ENCODE measurements at regions of chr20 and their contacts with region 1.

Region 1: GRCh38 chr20:34190679-34191090 is 50.5 kb upstream of the ASIP start:
- DNase-seq: peak; percentile 45 to 78
- H3K4me3 ChIP-seq: no peak overlapping the region
- H3K27ac ChIP-seq: no peak overlapping the region
- H3K4me1 ChIP-seq: no peaks in the 10 kb centered on the region
- H3K27me3 ChIP-seq: peaks cover 8% of the 10 kb centered on the region; the same call in 1 of the 2 replicates
- CTCF ChIP-seq: peak; percentile 78

Region 2: DNA sequence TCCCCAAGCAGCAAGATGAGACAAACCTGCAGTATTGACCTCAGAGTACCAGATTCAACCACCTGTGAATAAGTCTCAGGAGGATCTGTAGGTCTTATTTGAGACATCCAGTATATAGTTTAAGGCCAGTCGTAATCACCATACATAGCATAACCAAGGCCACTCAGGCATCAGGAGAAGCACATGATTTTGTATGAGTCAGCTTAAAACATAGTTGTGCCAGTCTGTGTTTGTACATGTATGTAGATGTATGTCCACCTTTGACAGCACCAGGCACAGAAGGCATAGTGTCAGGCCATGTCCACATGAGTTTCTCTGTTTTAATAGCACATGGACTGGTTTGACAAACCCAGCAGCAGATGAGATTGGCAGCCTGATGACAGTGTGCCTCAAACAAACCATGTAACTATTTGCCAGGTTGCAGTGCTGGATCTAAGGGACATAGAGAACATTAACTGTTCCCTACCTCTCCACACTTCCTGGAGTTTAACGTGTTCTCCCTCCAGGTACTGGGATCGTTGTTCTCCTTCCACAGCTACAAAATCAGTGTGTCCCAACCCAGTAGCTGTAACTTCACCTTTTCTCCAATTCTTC is 41.9 kb after region 1 on chr20:
- CTCF ChIA-PET with region 1: interaction called, 11 read pairs
- POLR2A ChIA-PET with region 1: no interaction called
- intact Hi-C with region 1: no loop called
- DNase-seq: no peak
- H3K4me3 ChIP-seq: no peak overlapping the region
- H3K27ac ChIP-seq: no peak overlapping the region
- H3K4me1 ChIP-seq: no peaks in the 10 kb centered on the region
- H3K27me3 ChIP-seq: no peaks in the 10 kb centered on the region
- CTCF ChIP-seq: no peak

Region 3: GRCh38 chr20:34403908-34404307 is 213.2 kb after region 1 on chr20:
- CTCF ChIA-PET with region 1: no interaction called
- POLR2A ChIA-PET with region 1: no interaction called
- intact Hi-C with region 1: loop called (anchors 10 kb)
- DNase-seq: no peak
- H3K4me3 ChIP-seq: no peak overlapping the region
- H3K27ac ChIP-seq: peak overlapping the region; percentile 20
- H3K4me1 ChIP-seq: peaks cover 38% of the 10 kb centered on the region
- H3K27me3 ChIP-seq: no peaks in the 10 kb centered on the region
- CTCF ChIP-seq: no peak

Region 4: DNA sequence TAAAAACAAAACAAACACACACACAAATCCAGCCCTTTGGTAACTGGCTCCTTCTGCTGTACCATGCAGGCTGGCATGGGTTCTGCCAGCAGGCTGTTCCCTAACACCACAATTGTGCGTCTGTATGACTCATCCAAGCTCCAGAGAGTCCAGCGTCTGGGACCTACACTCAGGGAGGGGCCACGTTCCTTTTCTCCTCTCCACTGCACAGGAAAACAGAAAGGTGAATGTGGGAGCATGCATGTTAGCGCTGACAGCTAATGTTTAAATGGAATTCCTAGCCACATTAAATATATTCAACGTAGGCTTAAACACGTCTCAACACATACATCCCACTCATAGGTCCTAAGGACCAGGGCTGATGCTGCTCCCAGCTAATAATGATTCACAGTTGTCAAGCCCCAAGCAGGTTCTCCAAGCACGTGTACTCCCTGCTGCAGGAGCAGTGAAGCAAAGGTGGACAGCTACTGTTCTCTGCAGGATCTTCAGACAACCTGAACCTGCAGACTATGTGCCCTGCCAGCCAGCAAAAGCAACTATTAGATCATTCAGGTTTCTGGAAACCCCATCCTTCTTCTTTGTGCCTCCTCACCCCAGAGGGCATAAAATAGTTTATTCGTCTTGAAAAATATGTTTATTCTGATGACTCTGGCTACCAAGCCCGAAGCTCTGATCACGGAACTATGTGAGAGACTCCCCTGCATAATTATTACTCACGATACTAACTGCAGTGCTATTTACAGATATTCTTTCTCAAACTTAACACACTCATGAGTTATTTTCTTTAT is 388.7 kb after region 1 on chr20:
- CTCF ChIA-PET with region 1: interaction called, 3 read pairs
- POLR2A ChIA-PET with region 1: no interaction called
- intact Hi-C with region 1: loop called (anchors 1 kb)
- DNase-seq: peak; percentile 61 to 78
- H3K4me3 ChIP-seq: no peak overlapping the region
- H3K27ac ChIP-seq: no peak overlapping the region
- H3K4me1 ChIP-seq: peaks cover 31% of the 10 kb centered on the region
- H3K27me3 ChIP-seq: no peaks in the 10 kb centered on the region
- CTCF ChIP-seq: peak; percentile 79

Region 5: GRCh38 chr20:34768096-34768495 is 577.4 kb after region 1 on chr20:
- CTCF ChIA-PET with region 1: interaction called, 22 read pairs
- POLR2A ChIA-PET with region 1: no interaction called
- intact Hi-C with region 1: loop called (anchors 1 kb)
- DNase-seq: no peak
- H3K4me3 ChIP-seq: no peak overlapping the region
- H3K27ac ChIP-seq: no peak overlapping the region
- H3K4me1 ChIP-seq: no peaks in the 10 kb centered on the region
- H3K27me3 ChIP-seq: no peaks in the 10 kb centered on the region
- CTCF ChIP-seq: no peak

Region 6: GRCh38 chr20:35200255-35200654 is 1009.6 kb after region 1 on chr20:
- CTCF ChIA-PET with region 1: no interaction called
- POLR2A ChIA-PET with region 1: no interaction called
- intact Hi-C with region 1: no loop called
- DNase-seq: peak in 1 of 2 experiments; percentile 43
- H3K4me3 ChIP-seq: no peak overlapping the region
- H3K27ac ChIP-seq: peak overlapping the region; percentile 23; the same call in 1 of the 2 replicates
- H3K4me1 ChIP-seq: peaks cover 9% of the 10 kb centered on the region
- H3K27me3 ChIP-seq: no peaks in the 10 kb centered on the region
- CTCF ChIP-seq: no peak

Measured in PC-9 (cell line).